Cardiac septum (tissue), 1 donor: ENCODE measurements at regions of chr17 and their contacts with region 1.

Region 1: DNA sequence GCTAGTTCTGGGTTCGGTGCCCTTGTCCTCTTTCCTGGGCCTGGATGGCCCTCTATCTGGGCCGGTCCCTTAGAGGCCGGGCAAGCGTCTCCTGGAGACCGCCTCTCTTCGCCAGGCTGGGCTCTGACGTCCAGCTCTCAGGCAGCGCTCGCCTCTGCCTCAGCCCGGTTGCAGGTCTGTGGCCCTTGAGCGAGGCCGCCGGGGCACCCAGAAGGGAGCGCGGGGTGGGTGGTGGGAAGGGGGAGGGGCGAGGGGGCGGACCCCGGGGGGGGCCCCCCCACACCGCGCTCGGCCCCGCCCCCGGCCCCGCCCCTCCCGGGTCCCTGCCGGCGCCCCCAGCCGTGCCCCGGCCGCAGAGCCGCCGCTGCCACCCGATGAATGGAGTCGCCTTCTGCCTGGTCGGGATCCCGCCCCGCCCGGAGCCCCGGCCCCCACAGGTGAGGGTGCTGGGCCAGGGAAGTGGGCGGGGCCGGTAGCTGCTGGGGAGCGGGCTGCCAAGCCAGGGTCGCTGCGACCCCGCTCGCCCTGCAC is at the start of gene ARHGAP23:
- DNase-seq: peak; percentile 89
- total RNA-seq, gene ARHGAP23: 96.8 TPM

Region 2: DNA sequence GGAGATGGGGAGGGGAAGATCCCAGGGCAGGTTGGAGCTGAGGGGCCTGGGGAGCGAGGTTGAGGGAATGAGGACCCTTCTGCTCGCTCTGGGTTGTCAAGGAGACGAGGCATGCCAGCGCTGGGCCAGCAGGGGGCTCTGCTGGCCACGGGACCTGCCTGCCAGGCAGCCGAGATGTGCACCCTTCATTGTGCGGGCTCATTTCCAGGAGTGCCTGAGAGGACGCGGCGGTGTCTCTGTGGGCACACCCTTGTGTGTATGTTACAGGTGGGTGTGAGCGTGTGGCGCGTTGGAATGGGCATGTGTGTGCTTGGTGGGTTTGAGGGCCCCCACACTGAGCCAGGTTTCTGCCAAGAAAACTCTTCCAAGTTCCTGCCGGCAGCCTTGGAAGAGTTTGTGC is 16.0 kb after region 1 on chr17:
- intact Hi-C with region 1: loop called (anchors 2 kb)
- DNase-seq: no peak

Region 3: DNA sequence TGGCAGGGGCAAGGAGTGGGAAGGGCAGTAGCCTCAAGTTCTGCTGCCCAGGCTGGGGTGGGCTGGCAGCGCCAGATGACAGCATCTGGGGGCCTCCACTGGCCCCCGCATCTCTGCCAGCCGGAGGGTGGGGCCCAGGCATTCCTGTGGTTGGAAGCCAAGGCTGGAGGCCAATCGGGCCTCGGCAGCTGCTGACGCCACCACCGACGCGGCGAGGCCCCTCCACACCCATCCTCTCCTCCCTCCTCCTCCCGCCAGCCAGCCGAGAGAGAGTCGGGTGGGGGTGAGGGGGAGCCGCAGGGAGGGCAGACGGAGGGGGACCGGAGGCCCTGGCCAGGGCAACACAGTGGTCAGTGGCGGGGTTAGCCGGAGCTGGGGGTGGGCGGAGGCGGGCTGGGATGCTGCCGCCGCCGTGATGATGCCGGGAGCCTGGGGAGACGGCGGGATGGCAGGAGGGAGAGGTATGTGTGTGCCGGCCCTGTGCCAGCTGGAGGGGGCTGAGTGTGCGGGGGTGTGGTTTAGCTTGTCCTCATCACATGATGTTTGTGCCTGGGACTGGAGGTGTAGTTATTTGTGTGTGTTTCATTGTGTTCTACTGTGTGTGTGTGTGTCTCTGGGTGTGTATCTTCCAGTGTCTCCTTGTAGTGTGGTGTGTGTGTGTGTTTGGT is 36.7 kb after region 1 on chr17:
- intact Hi-C with region 1: loop called (anchors 5 kb)
- DNase-seq: peak; percentile 93

Region 4: GRCh38 chr17:38485146-38485468 is 56.9 kb after region 1 on chr17:
- intact Hi-C with region 1: loop called (anchors 5 kb)
- DNase-seq: no peak

Region 5: DNA sequence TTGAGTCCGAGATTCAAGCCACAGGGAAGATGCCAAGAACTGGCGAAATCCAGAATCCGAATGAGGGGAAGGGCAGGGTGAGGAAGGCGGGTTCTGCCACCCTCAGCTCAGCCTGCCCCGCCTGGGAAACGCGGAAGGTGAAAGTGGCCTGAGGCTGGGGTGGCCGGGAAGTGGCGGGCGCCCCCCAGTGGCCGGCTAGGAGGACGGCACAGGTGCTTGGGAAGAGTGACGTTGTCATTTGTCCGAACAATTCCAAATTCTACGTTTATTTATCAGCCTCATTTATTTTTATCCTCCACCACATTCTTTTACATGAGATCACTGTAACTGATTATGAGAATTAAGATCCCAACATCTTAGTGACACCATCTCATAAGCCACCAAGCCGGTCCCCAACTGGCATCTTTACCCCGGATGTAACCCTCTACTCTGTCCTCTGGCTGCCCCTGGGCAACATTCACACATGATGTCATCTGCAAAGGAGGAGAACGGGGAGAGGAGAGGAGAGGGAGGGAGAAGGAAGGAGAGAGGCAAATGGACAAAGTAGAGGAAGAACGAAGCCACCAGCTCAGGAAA is 156.3 kb after region 1 on chr17:
- intact Hi-C with region 1: loop called (anchors 5 kb)
- DNase-seq: no peak

Region 6: GRCh38 chr17:38667099-38667786 is 239.1 kb after region 1 on chr17:
- intact Hi-C with region 1: loop called (anchors 10 kb)
- DNase-seq: no peak